Activated B cell treated with CpG ODN at 0.5 μM for 24 hours (primary cell): ENCODE measurements at regions of chr2 and their contacts with region 1.

Region 1: GRCh38 chr2:126527836-126528507 is 128.0 kb upstream of the GYPC start:
- DNase-seq: peak; percentile 28
- ATAC-seq: peak; percentile 58
- H3K4me3 Mint-ChIP-seq: no peak overlapping the region
- H3K27ac Mint-ChIP-seq: no peak overlapping the region
- H3K4me1 Mint-ChIP-seq: no peaks in the 10 kb centered on the region
- H3K27me3 Mint-ChIP-seq: peaks cover 2% of the 10 kb centered on the region
- CTCF ChIP-seq: no peak

Region 2: DNA sequence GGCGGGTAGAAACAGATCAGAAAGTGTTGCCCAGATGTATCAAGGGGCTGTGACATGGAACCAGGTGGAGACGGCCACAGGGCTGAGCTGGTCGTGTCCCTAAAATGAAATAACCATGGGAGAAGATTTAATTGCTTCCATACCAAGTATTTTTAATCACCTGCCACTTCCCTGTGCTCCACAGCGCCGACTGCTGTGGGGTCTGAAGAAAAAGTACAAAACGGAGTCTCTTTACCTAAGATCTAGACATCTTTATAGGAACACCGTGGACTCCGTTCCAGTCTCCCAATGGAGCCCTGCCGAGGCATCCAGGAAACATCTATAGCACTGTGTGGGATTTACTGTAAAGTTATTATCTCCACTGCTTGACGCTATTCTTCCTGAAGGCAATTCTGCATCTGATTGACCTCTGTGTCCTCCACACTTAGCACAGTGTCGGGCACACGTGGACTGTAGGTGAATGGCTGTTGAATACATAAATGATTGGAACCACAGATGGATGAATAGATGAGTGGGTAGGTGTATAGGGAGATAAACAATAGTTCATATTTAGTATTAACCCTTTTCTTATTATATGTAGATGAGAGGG is 106.4 kb after region 1 on chr2:
- CTCF ChIA-PET with region 1: interaction called, 7 read pairs
- POLR2A ChIA-PET with region 1: no interaction called
- intact Hi-C with region 1: loop called (anchors 2 kb)
- DNase-seq: no peak
- ATAC-seq: no peak
- H3K4me3 Mint-ChIP-seq: no peak overlapping the region
- H3K27ac Mint-ChIP-seq: no peak overlapping the region
- H3K4me1 Mint-ChIP-seq: peaks cover 16% of the 10 kb centered on the region
- H3K27me3 Mint-ChIP-seq: peaks cover 6% of the 10 kb centered on the region
- CTCF ChIP-seq: no peak

Region 3: GRCh38 chr2:126657636-126658318 is 129.8 kb after region 1 on chr2:
- CTCF ChIA-PET with region 1: interaction called, 4 read pairs
- POLR2A ChIA-PET with region 1: no interaction called
- intact Hi-C with region 1: loop called (anchors 5 kb)
- DNase-seq: peak; percentile 40
- ATAC-seq: peak; percentile 69
- H3K4me3 Mint-ChIP-seq: peak overlapping the region; percentile 94
- H3K27ac Mint-ChIP-seq: peak overlapping the region; percentile 94
- H3K4me1 Mint-ChIP-seq: peaks cover 68% of the 10 kb centered on the region
- H3K27me3 Mint-ChIP-seq: no peaks in the 10 kb centered on the region
- CTCF ChIP-seq: no peak

Region 4: GRCh38 chr2:126749537-126749936 is 221.6 kb after region 1 on chr2:
- CTCF ChIA-PET with region 1: interaction called, 25 read pairs
- POLR2A ChIA-PET with region 1: no interaction called
- intact Hi-C with region 1: loop called (anchors 1 kb)
- DNase-seq: no peak
- ATAC-seq: no peak
- H3K4me3 Mint-ChIP-seq: no peak overlapping the region
- H3K27ac Mint-ChIP-seq: no peak overlapping the region
- H3K4me1 Mint-ChIP-seq: no peaks in the 10 kb centered on the region
- H3K27me3 Mint-ChIP-seq: peaks cover 10% of the 10 kb centered on the region
- CTCF ChIP-seq: no peak

Region 5: DNA sequence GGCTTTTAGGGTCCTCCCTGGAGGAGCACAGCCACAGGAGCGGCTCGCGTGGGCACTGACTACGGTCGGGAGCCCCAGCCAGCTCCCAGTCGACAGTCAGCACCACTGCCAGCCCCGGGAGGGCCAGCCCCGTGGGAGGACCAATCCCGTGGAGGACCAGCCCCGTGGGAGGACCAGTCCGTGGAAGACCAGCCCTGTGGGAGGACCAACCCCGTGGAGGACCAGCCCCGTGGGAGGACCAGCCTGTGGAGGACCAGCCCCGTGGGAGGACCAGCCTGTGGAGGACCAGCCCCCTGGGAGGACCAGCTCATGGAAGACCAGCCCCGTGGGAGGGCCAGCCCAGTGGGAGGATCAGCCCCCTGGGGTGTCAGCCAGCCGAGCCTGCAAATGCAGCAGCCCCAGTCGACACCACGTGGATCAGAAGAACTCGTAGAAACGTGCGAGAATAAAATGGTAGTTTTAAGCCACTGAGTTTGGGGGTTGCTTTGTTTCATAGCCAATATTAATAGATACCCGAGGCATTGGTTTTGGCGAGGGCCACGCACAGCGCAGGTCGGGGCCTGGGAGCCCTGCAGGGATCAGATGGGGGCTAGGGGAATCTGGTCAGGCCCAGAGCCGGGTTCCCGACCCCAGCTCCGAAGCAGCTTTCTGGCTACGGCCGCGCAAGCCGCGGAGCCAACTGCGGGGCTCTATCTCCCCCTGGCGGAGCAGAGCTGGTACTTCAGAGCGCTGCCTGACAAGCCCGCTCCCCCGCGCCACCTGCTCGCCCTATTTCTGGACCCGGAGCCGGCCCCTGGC is 443.7 kb after region 1 on chr2:
- CTCF ChIA-PET with region 1: interaction called, 24 read pairs
- POLR2A ChIA-PET with region 1: no interaction called
- intact Hi-C with region 1: loop called (anchors 1 kb)
- DNase-seq: peak; percentile 63
- ATAC-seq: peak; percentile 94
- H3K4me3 Mint-ChIP-seq: peak overlapping the region; percentile 74
- H3K27ac Mint-ChIP-seq: no peak overlapping the region
- H3K4me1 Mint-ChIP-seq: no peaks in the 10 kb centered on the region
- H3K27me3 Mint-ChIP-seq: peaks cover 48% of the 10 kb centered on the region
- CTCF ChIP-seq: peak; percentile 67